Mammary epithelial cell (primary cell): ENCODE measurements at regions of chr5 and their contacts with region 1.

Region 1: GRCh38 chr5:132386644-132387286 is 17.3 kb downstream of the SLC22A5 start:
- DNase-seq: peak; percentile 58
- H3K4me3 ChIP-seq: no peak overlapping the region
- H3K27ac ChIP-seq: no peak overlapping the region
- H3K4me1 ChIP-seq: peaks cover 47% of the 10 kb centered on the region
- H3K27me3 ChIP-seq: no peaks in the 10 kb centered on the region
- CTCF ChIP-seq: peak; percentile 75 to 84

Region 2: DNA sequence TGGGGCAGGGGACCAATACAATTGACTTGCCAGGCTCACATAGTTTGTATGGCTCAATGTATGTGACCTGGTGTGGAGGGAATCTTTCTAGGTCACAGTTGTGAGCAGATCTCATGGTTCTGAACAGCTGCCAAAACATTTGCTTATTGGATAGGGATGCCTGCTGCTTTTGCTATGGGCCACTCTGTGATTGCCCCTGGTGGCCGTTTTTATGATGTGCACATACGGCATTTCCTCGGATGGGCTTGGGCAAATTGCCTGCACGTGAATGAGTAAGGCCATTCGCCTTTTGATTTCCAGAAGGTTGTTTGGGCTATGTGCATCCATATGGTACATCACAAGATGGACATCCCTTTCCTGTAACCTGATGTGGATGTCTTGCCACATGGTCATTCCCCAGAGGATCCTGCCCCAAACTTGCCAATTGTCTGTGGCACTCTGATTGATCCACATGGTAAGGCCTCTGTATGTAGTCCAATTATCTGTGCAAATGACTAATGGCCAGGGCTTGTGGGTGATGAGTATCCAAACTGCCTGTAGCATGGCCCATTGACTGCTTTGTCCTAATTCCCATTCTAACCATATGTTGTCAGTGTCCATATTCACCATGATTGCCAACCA is 103.2 kb before region 1 on chr5:
- CTCF ChIA-PET with region 1: no interaction called
- dilution Hi-C with region 1: no loop called
- in situ Hi-C with region 1: no loop called
- intact Hi-C with region 1: loop called (anchors 2 kb)
- DNase-seq: peak; percentile 48
- H3K4me3 ChIP-seq: no peak overlapping the region
- H3K27ac ChIP-seq: no peak overlapping the region
- H3K4me1 ChIP-seq: peaks cover 3% of the 10 kb centered on the region
- H3K27me3 ChIP-seq: no peaks in the 10 kb centered on the region
- CTCF ChIP-seq: peak; percentile 58 to 77

Region 3: DNA sequence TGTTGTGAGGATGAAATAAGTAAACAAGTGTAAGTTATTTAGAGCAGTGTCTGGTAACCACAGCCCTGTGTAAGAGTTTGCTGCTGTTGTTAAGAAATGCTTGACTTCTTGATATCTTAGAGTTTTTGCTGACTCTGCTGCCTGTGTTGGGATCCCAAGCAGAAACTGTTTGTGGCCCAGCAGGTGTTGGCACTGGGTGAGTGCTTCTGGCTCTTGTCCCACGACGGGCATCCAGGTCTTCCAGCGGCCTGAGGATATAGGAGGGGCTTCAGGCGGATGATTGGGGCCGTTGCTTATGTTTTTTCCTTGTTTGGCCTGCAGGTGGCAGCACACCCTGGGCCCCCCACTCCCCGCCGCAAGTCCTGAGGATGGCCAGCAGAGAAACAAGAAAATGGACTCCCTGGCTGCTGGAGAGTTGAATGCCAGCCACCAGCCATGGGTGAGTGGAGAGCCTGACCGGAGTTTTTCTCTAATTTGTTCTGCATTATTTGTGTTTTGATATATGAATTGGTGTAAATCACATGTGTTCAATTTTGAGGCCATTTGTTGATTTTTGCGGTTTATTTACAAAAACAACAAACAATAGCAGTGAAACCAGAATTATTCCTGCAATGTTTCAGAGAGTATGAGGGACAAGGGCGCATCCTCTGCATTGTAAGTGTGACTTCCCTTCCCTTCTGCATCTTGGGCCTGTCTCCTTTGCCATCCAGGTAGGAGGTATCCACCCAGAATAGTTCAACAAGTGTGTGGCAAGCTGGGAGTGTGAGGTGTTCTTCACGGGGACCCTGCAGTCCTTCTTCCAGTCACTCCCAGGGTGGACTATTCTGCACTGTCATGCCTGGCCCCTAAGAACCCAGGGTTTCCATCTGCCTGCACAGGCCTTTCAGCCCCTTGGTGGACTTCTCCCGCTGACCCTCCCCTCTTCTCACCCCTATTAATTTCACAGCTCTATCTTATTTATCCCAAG is 33.0 kb after region 1 on chr5:
- CTCF ChIA-PET with region 1: interaction called, 3 read pairs
- dilution Hi-C with region 1: no loop called
- in situ Hi-C with region 1: no loop called
- intact Hi-C with region 1: loop called (anchors 2 kb)
- DNase-seq: peak; percentile 48
- H3K4me3 ChIP-seq: no peak overlapping the region
- H3K27ac ChIP-seq: no peak overlapping the region
- H3K4me1 ChIP-seq: peaks cover 51% of the 10 kb centered on the region
- H3K27me3 ChIP-seq: no peaks in the 10 kb centered on the region
- CTCF ChIP-seq: peak; percentile 45 to 82

Region 4: GRCh38 chr5:132490486-132491367 is 104.0 kb after region 1 on chr5 and contains the start of gene IRF1:
- CTCF ChIA-PET with region 1: no interaction called
- dilution Hi-C with region 1: no loop called
- in situ Hi-C with region 1: loop called (anchors 10 kb)
- intact Hi-C with region 1: no loop called
- DNase-seq: peak; percentile 98
- H3K4me3 ChIP-seq: peak within 1 kb of the TSS; percentile 81 to 96 (median 86)
- H3K27ac ChIP-seq: peak within 1 kb of the TSS; percentile 86
- H3K4me1 ChIP-seq: peaks cover 28% of the 10 kb centered on the region
- H3K27me3 ChIP-seq: no peaks in the 10 kb centered on the region
- CTCF ChIP-seq: peak in 1 of 2 donors; percentile 20
- total RNA-seq, gene IRF1: 5.3 to 14.9 TPM

Region 5: GRCh38 chr5:132714456-132715307 is 327.9 kb after region 1 on chr5:
- CTCF ChIA-PET with region 1: no interaction called
- dilution Hi-C with region 1: no loop called
- in situ Hi-C with region 1: no loop called
- intact Hi-C with region 1: loop called (anchors 5 kb)
- DNase-seq: peak; percentile 1
- H3K4me3 ChIP-seq: no peak overlapping the region
- H3K27ac ChIP-seq: no peak overlapping the region
- H3K4me1 ChIP-seq: no peaks in the 10 kb centered on the region
- H3K27me3 ChIP-seq: no peaks in the 10 kb centered on the region
- CTCF ChIP-seq: peak; percentile 30 to 42